AG04450 (cell line): ENCODE measurements at regions of chr5 and their contacts with region 1.

Region 1: DNA sequence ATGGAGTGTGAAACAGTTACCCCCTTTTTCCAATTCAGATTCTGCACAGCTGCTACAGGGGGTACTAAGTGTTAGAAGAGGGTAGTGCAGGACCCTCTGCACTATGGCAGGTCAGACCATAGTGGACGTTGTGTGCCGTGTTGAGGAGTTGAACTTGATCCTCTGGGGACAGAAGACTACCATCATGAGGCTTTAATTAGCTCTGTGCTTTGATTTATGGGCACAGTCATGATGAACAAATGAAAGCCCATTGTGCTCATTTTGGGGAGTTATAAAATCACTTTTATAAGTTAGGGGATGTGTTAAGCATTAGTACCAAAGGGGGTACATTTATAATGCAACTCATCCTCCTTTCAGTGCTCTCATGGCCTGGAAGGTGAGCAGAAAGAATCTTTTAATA is 62.7 kb downstream of the ZSWIM6 start:
- DNase-seq: no peak
- H3K4me3 ChIP-seq: no peak overlapping the region
- H3K27ac ChIP-seq: no peak overlapping the region
- H3K27me3 ChIP-seq: no peaks in the 10 kb centered on the region
- CTCF ChIP-seq: no peak

Region 2: GRCh38 chr5:61431923-61432620 is 37.3 kb after region 1 on chr5:
- CTCF ChIA-PET with region 1: no interaction called
- POLR2A ChIA-PET with region 1: interaction called, 11 read pairs
- DNase-seq: no peak
- H3K4me3 ChIP-seq: no peak overlapping the region
- H3K27ac ChIP-seq: no peak overlapping the region
- H3K27me3 ChIP-seq: no peaks in the 10 kb centered on the region
- CTCF ChIP-seq: no peak